GM12878 (cell line): ENCODE measurements at regions of chr14 and their contacts with region 1.

Region 1: DNA sequence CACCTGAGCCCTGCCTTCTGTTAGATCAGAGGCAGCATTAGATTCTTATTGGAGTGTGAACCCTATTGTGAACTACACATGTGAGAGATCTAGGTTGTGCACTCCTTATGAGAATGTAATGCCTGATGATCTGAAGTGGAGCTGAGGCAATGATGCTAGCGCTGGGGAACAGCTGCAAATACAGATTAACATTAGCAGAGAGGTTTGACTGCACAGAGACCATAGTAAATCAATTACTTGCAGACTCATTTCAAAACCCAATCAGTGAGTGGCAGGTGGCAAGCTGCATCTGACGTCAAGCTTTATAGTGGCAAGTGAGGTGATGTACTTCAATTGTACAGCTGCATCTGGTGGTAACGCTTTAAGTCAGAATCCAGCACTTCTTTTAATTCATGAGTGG is 141.6 kb downstream of the GPHN start:
- DNase-seq: peak; percentile 79
- ATAC-seq: peak; percentile 82
- H3K4me3 ChIP-seq: peak overlapping the region; percentile 54
- H3K27ac ChIP-seq: peak overlapping the region; percentile 96
- H3K4me1 ChIP-seq: peaks cover 36% of the 10 kb centered on the region
- H3K27me3 ChIP-seq: no peaks in the 10 kb centered on the region
- CTCF ChIP-seq: no peak
- EP300 ChIP-seq: peak; percentile 83 to 90
- POLR2A ChIP-seq: no peak
- RAD21 ChIP-seq: no peak

Region 2: DNA sequence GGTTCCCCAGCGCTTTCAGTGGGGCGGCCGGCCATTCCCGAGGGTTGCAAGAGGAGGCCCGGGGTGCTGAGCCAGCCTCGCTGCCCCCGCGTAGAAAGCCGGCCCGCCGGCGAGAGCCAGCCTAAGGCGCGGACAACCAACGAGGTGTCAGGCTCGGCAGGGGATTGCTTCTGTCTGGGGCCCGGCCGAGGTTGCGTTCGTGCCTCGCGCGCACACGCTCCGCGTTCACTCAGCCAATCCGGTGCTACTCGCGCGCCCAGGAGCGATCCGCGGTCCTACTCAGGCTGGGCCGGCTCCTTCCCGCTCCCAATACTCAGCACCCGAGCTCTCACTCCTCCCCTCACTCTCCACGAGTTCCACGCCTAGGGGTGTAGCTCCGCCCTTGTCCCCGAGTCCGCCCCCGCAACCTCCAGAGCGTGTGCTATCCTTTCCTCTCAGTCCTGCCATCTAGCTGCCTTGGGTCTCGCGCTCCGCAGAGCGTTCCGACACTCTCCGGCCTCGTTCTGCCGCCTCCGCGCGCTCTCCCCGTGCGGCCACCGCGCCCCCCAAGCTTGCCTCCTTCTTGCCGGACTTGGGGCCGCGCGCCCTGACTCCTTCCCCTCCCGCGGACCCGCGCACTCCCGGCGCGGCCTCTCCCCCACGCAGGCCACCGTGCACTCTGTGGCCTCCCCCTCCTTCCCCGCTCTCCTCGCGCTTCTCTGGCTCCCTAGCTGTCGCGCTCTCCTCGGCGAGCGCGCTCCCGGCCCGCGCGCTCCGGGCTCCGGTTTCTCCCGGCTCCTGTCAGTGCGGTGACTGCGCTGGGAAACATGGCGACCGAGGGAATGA is 141.6 kb before region 1 on chr14 and contains the start of gene GPHN:
- CTCF ChIA-PET with region 1: interaction called, 4 read pairs
- POLR2A ChIA-PET with region 1: interaction called, 4 read pairs
- RAD21 ChIA-PET with region 1: interaction called, 5 read pairs
- SMC1A ChIA-PET with region 1: interaction called, 9 read pairs
- in situ Hi-C with region 1: no loop called
- intact Hi-C with region 1: loop called (anchors 5 kb)
- DNase-seq: peak; percentile 95
- ATAC-seq: peak; percentile 91
- H3K4me3 ChIP-seq: peak within 1 kb of the TSS; percentile 95
- H3K27ac ChIP-seq: peak within 1 kb of the TSS; percentile 87
- H3K4me1 ChIP-seq: peaks cover 4% of the 10 kb centered on the region
- H3K27me3 ChIP-seq: no peaks in the 10 kb centered on the region
- CTCF ChIP-seq: peak; percentile 15 to 23 (median 20); a peak in 4 of 6 replicates
- EP300 ChIP-seq: 0 out of 4 replicates have a peak, but pooled peaks of 1 of the 2 experiments have one; percentile 13
- POLR2A ChIP-seq: peak; percentile 95
- RAD21 ChIP-seq: no peak
- polyA plus RNA-seq, gene GPHN: 32.3 to 33.1 TPM

Region 3: DNA sequence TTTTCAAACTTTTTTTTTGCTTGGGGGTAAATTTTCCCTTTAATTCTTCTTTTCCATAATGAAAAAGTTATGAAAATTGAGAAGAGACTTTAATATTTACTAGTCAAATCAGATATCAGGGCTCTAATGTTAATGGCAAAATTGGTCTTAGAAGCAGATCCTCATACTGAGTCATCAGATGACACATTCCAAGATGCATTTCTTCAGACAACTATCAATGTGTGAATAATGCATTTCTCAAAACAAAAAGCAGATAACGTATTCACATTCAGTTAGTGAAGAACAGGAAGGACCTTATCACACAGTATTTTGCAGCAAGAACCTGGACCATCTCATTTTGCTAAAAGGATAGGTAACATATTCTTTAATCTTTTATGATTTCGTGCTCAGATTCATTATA is 10.8 kb before region 1 on chr14:
- CTCF ChIA-PET with region 1: interaction called, 4 read pairs
- POLR2A ChIA-PET with region 1: interaction called, 6 read pairs
- RAD21 ChIA-PET with region 1: interaction called, 9 read pairs
- SMC1A ChIA-PET with region 1: interaction called, 13 read pairs
- in situ Hi-C with region 1: no loop called
- intact Hi-C with region 1: no loop called
- DNase-seq: no peak
- ATAC-seq: no peak
- H3K4me3 ChIP-seq: no peak overlapping the region
- H3K27ac ChIP-seq: no peak overlapping the region
- H3K4me1 ChIP-seq: no peaks in the 10 kb centered on the region
- H3K27me3 ChIP-seq: no peaks in the 10 kb centered on the region
- CTCF ChIP-seq: no peak
- EP300 ChIP-seq: no peak
- POLR2A ChIP-seq: no peak
- RAD21 ChIP-seq: no peak

Region 4: DNA sequence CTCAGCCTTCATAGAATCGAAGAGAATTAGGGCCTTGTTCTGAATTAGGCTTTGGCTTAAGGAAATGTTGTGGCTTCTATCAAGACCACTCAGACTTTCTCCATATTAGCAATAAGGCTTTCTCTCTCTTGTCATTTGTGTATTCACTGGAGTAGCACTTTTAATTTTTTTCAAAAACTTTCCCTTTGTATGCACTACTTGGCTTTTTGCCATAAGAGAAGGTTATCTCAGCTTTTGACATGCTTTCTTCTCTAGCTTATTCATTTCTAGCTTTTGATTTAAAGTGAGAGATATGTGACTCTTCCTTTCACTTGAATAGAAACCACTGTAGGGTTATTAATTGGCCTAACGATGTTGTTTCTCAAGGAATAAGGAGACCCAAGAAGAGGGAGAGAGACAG is 102.6 kb after region 1 on chr14:
- CTCF ChIA-PET with region 1: no interaction called
- POLR2A ChIA-PET with region 1: no interaction called
- RAD21 ChIA-PET with region 1: interaction called, 11 read pairs
- SMC1A ChIA-PET with region 1: interaction called, 13 read pairs
- in situ Hi-C with region 1: no loop called
- intact Hi-C with region 1: no loop called
- DNase-seq: peak; percentile 41
- ATAC-seq: peak; percentile 82
- H3K4me3 ChIP-seq: no peak overlapping the region
- H3K27ac ChIP-seq: no peak overlapping the region
- H3K4me1 ChIP-seq: peaks cover 11% of the 10 kb centered on the region; the same call in 1 of the 2 replicates
- H3K27me3 ChIP-seq: no peaks in the 10 kb centered on the region
- CTCF ChIP-seq: no peak
- EP300 ChIP-seq: peak in 1 of 2 experiments; percentile 23; a peak in 1 of 4 replicates
- POLR2A ChIP-seq: no peak
- RAD21 ChIP-seq: no peak

Region 5: DNA sequence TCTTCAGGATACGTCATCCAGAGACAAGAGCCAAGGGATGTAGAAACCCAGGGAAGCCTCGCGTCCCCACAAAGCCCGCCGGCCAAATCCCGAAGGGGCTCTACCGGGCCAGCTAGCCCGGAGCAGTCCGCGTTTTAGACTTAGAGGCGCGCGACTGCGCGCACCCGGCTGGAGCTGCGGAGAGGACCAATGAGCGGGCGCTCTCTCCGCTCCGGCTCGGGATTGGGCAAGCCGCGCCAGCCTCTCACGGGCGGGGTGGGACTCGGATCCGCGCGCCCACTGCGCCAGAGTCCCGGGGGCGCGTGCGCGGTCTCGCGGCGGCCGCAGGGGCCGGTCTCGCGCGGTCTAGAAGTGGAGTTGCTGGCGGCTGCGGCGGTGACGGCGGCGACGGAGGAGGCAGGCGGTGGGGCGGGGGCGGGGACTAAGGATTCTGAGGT is 591.5 kb after region 1 on chr14:
- CTCF ChIA-PET with region 1: no interaction called
- POLR2A ChIA-PET with region 1: no interaction called
- RAD21 ChIA-PET with region 1: no interaction called
- SMC1A ChIA-PET with region 1: no interaction called
- in situ Hi-C with region 1: no loop called
- intact Hi-C with region 1: loop called (anchors 10 kb)
- DNase-seq: peak; percentile 71
- ATAC-seq: peak; percentile 97
- H3K4me3 ChIP-seq: peak overlapping the region; percentile 84
- H3K27ac ChIP-seq: peak overlapping the region; percentile 85
- H3K4me1 ChIP-seq: peaks cover 4% of the 10 kb centered on the region; the same call in 1 of the 2 replicates
- H3K27me3 ChIP-seq: no peaks in the 10 kb centered on the region
- CTCF ChIP-seq: no peak
- EP300 ChIP-seq: no peak
- POLR2A ChIP-seq: peak; percentile 64; the same call in 1 of the 2 replicates
- RAD21 ChIP-seq: no peak